ENCODE measurements at regions of chr10 and their contacts with region 1.

Region 1: GRCh38 chr10:4656576-4657182 is 169.3 kb upstream of the AKR1E2 start:
- DNase-seq: peak; percentile 66
- H3K4me3 Mint-ChIP-seq: no peak overlapping the region
- H3K27ac Mint-ChIP-seq: no peak overlapping the region
- H3K4me1 Mint-ChIP-seq: peaks cover 19% of the 10 kb centered on the region
- H3K27me3 Mint-ChIP-seq: no peaks in the 10 kb centered on the region
- CTCF ChIP-seq: peak; percentile 81

Region 2: DNA sequence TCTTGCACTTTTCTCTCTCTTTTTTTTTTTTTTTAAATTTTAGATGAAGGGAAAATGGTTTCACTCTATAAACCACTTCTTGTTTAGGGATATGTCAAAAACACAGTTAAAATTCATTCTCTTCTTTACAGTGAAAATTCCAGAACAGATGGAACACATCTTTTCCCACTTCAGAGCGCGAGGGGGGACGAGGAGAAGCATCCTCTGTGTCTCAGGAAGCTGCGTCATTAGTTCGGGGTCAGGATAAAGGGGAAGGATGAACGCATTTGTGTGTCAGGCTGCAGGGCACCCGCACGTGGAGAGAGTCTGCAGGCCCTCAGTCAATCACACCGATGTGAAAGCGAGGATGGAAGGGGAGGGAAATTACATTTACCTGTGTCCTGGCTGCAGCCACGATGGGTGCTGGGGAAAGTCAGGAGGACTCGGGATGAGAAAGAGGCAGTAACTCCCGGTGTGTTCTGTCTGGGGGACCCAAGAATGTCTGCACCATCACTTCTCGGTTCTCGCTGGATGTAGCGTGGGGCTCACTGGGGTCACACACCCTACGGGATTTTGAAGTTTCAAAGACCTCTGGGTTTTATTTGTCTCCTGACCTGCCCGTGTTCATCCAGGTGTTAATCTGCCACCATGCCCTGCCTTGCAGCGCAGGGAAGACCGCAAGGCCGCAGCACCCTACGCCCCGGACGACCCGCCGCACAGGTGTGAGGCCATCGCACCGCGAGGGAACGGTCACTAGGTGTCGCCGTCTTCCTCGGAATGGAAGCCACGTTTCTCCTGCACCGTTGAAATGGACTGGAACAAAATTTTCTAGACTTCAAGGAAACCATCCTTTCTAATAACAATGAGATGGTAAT is 1417.4 kb before region 1 on chr10:
- CTCF ChIA-PET with region 1: no interaction called
- intact Hi-C with region 1: loop called (anchors 10 kb)
- DNase-seq: peak; percentile 85
- H3K4me3 Mint-ChIP-seq: no peak overlapping the region
- H3K27ac Mint-ChIP-seq: no peak overlapping the region
- H3K4me1 Mint-ChIP-seq: peaks cover 9% of the 10 kb centered on the region
- H3K27me3 Mint-ChIP-seq: no peaks in the 10 kb centered on the region
- CTCF ChIP-seq: peak; percentile 73

Region 3: DNA sequence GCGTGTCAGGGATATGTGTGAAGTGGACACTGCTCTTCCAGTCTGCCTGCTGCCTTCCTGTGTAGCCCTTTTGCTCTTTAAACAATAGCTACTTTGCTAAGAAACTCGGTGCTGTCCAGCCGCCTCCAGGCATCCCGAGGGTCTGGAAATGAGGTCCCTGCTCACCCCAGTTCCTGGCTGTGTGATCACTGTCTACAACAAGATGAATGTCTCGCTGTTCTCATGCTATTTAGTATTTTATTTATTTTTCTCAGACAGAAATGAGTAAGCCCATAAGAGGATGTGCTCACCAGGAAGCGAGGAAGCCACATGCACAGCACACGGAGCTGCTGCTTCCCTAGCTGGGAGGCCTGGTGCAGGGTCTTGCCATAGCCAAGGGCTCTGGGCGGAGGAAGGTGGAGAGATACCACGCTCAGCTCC is 1317.1 kb before region 1 on chr10:
- CTCF ChIA-PET with region 1: no interaction called
- intact Hi-C with region 1: no loop called
- DNase-seq: no peak
- H3K4me3 Mint-ChIP-seq: no peak overlapping the region
- H3K27ac Mint-ChIP-seq: no peak overlapping the region
- H3K4me1 Mint-ChIP-seq: no peaks in the 10 kb centered on the region
- H3K27me3 Mint-ChIP-seq: peaks cover 28% of the 10 kb centered on the region
- CTCF ChIP-seq: no peak

Region 4: GRCh38 chr10:4241724-4242345 is 414.8 kb before region 1 on chr10:
- CTCF ChIA-PET with region 1: no interaction called
- intact Hi-C with region 1: loop called (anchors 10 kb)
- DNase-seq: peak; percentile 29
- H3K4me3 Mint-ChIP-seq: peak overlapping the region; percentile 63
- H3K27ac Mint-ChIP-seq: peak overlapping the region; percentile 85
- H3K4me1 Mint-ChIP-seq: peaks cover 31% of the 10 kb centered on the region
- H3K27me3 Mint-ChIP-seq: no peaks in the 10 kb centered on the region
- CTCF ChIP-seq: no peak

Region 5: DNA sequence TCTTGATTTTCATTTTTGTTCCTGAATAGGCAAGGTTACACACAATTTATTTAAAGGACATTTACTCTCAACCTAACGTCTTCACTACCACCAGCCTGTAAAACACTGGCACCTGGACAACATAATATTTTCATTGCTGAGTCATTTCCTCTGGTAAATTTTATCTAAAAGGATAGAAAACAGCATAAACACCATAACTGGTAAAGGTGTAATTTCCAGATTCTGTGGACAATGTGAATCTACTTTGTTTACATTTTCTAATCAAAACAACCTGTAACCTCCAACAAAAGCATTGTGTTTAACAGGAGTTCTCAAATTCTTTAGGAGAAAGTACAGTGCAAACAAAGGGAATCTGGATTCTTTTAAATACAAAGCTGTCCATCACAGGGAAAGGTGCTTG is 302.7 kb before region 1 on chr10:
- CTCF ChIA-PET with region 1: no interaction called
- intact Hi-C with region 1: loop called (anchors 10 kb)
- DNase-seq: peak; percentile 9
- H3K4me3 Mint-ChIP-seq: peak overlapping the region; percentile 18
- H3K27ac Mint-ChIP-seq: peak overlapping the region; percentile 84
- H3K4me1 Mint-ChIP-seq: peaks cover 54% of the 10 kb centered on the region
- H3K27me3 Mint-ChIP-seq: no peaks in the 10 kb centered on the region
- CTCF ChIP-seq: no peak

Region 6: DNA sequence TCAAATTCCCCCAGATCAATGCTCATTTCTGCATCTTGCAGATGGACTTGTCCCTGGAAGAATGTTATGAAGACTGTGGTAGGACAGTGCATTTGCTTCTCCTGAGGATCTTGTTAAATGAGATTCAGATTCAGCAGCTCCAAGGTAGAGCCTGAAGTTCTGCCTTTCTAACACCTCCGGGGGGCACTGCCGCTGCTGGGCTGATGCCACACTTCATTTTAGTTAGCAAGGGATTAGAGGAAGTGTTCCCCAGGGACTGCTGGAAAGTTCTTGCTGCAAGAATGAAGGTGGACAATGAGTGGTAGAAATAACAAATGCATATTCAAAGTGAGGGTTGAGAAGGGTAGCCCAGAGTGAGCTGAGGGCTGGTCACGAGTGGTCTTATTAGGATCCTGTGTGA is 265.0 kb before region 1 on chr10:
- CTCF ChIA-PET with region 1: no interaction called
- intact Hi-C with region 1: loop called (anchors 5 kb)
- DNase-seq: peak; percentile 46
- H3K4me3 Mint-ChIP-seq: no peak overlapping the region
- H3K27ac Mint-ChIP-seq: no peak overlapping the region
- H3K4me1 Mint-ChIP-seq: peaks cover 7% of the 10 kb centered on the region
- H3K27me3 Mint-ChIP-seq: no peaks in the 10 kb centered on the region
- CTCF ChIP-seq: no peak

Region 7: GRCh38 chr10:4512671-4513240 is 143.9 kb before region 1 on chr10:
- CTCF ChIA-PET with region 1: no interaction called
- intact Hi-C with region 1: loop called (anchors 2 kb)
- DNase-seq: peak; percentile 59
- H3K4me3 Mint-ChIP-seq: no peak overlapping the region
- H3K27ac Mint-ChIP-seq: no peak overlapping the region
- H3K4me1 Mint-ChIP-seq: peaks cover 24% of the 10 kb centered on the region
- H3K27me3 Mint-ChIP-seq: no peaks in the 10 kb centered on the region
- CTCF ChIP-seq: peak; percentile 62

Region 8: DNA sequence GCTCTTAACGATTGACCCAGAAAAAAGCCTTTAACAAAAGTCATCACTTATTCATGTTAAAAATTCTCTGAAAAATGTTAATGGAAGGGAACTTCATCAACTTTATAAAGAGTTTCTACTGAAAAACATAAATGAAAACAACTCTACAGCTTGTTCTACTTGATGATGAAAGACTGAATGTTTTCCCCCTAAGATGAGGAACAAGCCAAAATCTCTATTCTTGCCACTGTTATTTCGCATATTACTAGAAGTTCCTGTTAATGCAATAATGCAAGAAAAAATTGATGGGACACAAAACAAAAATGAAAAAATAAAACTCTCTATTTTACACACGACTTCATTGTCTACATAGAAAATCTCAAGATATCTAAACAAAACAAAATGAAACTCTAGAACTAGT is 80.5 kb before region 1 on chr10:
- CTCF ChIA-PET with region 1: no interaction called
- intact Hi-C with region 1: no loop called
- DNase-seq: no peak
- H3K4me3 Mint-ChIP-seq: no peak overlapping the region
- H3K27ac Mint-ChIP-seq: no peak overlapping the region
- H3K4me1 Mint-ChIP-seq: no peaks in the 10 kb centered on the region
- H3K27me3 Mint-ChIP-seq: no peaks in the 10 kb centered on the region
- CTCF ChIP-seq: no peak

Region 9: DNA sequence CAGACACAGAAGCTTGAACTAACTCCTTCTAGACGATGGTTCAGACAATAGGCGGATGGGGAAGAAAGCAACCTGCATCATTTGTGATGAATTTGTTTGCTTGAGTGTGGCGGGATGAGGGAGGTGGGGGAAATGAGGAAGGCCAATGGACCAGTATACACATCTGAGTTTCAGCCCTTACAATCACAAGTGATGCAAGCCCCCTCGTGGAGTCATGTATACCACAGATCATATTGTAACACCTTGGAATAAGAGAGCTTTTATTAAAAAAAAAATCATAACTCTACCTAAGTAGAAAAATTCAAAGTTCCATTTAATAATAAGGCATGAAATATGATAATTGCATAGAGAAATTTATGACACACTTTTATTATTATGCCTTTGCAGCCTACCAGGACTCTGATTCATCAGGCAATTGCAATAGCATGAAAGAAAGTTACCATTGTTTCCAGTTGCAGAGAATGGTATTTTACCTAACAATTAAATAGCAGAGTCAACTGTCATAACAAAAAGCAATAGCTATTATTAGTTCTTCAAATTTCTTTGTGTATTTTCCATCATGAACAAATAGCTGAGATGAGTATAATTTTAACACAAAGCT is 60.9 kb before region 1 on chr10:
- CTCF ChIA-PET with region 1: no interaction called
- intact Hi-C with region 1: no loop called
- DNase-seq: no peak
- H3K4me3 Mint-ChIP-seq: no peak overlapping the region
- H3K27ac Mint-ChIP-seq: no peak overlapping the region
- H3K4me1 Mint-ChIP-seq: no peaks in the 10 kb centered on the region
- H3K27me3 Mint-ChIP-seq: no peaks in the 10 kb centered on the region
- CTCF ChIP-seq: no peak

Region 10: DNA sequence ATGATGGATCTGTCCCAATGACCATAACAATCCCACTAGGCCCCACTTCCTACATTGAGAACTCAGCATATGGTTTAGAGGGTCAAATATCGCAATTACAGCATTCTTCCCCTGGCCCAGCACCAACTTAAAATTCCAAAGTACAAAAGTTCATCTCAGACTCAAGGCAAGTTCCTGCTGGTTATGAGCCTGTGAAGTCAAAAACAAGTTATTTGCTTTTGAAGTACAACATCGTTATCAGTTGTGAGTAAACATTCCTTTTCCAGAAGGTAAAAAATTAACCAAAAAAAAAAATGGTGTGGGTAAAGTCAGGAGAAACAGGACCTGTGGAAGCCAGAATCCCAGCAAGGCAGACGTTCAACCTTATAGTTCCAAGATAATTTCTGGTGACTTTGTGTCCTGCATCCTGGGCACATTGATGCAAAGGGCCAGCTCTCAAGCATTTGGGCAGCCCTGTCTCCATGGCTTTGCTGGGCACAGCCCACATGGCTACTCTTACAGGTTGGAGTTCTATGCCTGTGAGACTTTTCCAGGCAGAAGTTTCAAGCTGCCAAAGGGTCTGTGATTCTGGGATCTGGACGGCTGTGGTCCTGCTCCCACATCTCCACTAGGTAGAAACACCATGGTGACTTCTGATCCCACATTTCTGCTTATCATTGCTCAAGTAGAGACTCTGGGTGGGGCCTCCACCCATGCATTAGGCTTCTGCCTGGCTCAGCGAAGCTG is 490.7 kb after region 1 on chr10:
- CTCF ChIA-PET with region 1: no interaction called
- intact Hi-C with region 1: no loop called
- DNase-seq: peak; percentile 47
- H3K4me3 Mint-ChIP-seq: peak overlapping the region; percentile 44
- H3K27ac Mint-ChIP-seq: peak overlapping the region; percentile 85
- H3K4me1 Mint-ChIP-seq: peaks cover 39% of the 10 kb centered on the region
- H3K27me3 Mint-ChIP-seq: no peaks in the 10 kb centered on the region
- CTCF ChIP-seq: no peak